Heart left ventricle (tissue), 16 donors: ENCODE measurements at regions of chr10 and their contacts with region 1.

Region 1: DNA sequence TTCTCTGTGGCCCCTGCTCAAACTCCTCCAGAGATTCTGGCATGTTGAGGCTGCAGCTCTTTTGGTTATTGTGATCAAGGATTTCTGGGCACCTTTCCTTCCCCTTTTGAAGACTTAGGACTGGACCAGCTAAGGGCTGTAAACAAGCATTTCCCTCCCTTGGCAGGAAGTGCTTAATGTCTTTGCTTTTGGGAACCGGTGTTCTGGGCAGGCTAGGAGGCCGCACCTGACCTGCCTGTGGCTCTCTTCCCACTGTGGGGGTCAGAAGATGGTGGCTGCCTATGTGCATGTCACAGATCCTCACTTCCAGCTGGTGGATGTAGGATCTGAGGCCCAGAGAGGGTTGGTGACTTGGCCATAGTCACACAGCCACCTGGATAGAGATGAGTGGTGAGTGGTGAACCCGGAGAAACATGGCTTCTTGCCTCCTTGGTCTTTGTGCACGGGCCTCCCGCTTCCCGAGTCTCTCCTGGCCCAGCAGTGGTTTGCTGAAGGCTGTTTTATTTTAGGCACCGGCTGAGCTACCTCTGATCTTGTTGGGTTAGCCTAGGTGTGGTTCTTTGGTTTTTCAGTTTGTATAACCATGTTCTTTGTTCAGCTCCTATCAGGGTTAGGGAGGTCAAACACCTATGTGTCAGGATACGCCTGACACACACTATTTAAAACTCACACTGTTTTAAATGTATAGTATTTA is 82.0 kb downstream of the GRK5 start:
- DNase-seq: peak in 2 of 5 donors; percentile 30 to 54
- ATAC-seq: peak in 1 of 4 donors; percentile 38
- H3K4me3 ChIP-seq: no peak overlapping the region
- H3K27ac ChIP-seq: peak overlapping the region; percentile 35 to 82 (median 58)
- H3K4me1 ChIP-seq: peaks cover 29 to 90% (median 67%) of the 10 kb centered on the region in 12 donors
- H3K27me3 ChIP-seq: no peaks in the 10 kb centered on the region
- CTCF ChIP-seq: no peak
- POLR2A ChIP-seq: no peak

Region 2: GRCh38 chr10:119253433-119254174 is 35.8 kb before region 1 on chr10:
- intact Hi-C with region 1: loop called in 1 of 10 experiments (anchors 5 kb)
- DNase-seq: peak; percentile 67 to 84 (median 78)
- ATAC-seq: peak; percentile 64 to 74 (median 70)
- H3K4me3 ChIP-seq: peak overlapping the region in 2 of 12 donors; percentile 7 to 19
- H3K27ac ChIP-seq: peak overlapping the region; percentile 67 to 94 (median 82)
- H3K4me1 ChIP-seq: peaks cover 18 to 85% (median 64%) of the 10 kb centered on the region in 12 donors
- H3K27me3 ChIP-seq: no peaks in the 10 kb centered on the region
- CTCF ChIP-seq: peak in 2 of 12 donors; percentile 7 to 27
- POLR2A ChIP-seq: no peak